ENCODE measurements at regions of chr2 and their contacts with region 1.

Region 1: GRCh38 chr2:64434039-64434657 is 19.8 kb upstream of the LGALSL start:
- DNase-seq: no peak
- H3K4me3 ChIP-seq: no peak overlapping the region
- H3K27ac ChIP-seq: no peak overlapping the region
- H3K4me1 ChIP-seq: no peaks in the 10 kb centered on the region
- H3K27me3 ChIP-seq: no peaks in the 10 kb centered on the region
- CTCF ChIP-seq: no peak
- EP300 ChIP-seq: no peak
- POLR2A ChIP-seq: no peak

Region 2: GRCh38 chr2:64410671-64411070 is 23.5 kb before region 1 on chr2:
- in situ Hi-C with region 1: no loop called
- intact Hi-C with region 1: loop called (anchors 1 kb)
- DNase-seq: no peak
- H3K4me3 ChIP-seq: no peak overlapping the region
- H3K27ac ChIP-seq: no peak overlapping the region
- H3K4me1 ChIP-seq: peaks cover 5 to 22% (median 16%) of the 10 kb centered on the region in 4 donors
- H3K27me3 ChIP-seq: no peaks in the 10 kb centered on the region
- CTCF ChIP-seq: no peak
- EP300 ChIP-seq: no peak
- POLR2A ChIP-seq: no peak

Region 3: DNA sequence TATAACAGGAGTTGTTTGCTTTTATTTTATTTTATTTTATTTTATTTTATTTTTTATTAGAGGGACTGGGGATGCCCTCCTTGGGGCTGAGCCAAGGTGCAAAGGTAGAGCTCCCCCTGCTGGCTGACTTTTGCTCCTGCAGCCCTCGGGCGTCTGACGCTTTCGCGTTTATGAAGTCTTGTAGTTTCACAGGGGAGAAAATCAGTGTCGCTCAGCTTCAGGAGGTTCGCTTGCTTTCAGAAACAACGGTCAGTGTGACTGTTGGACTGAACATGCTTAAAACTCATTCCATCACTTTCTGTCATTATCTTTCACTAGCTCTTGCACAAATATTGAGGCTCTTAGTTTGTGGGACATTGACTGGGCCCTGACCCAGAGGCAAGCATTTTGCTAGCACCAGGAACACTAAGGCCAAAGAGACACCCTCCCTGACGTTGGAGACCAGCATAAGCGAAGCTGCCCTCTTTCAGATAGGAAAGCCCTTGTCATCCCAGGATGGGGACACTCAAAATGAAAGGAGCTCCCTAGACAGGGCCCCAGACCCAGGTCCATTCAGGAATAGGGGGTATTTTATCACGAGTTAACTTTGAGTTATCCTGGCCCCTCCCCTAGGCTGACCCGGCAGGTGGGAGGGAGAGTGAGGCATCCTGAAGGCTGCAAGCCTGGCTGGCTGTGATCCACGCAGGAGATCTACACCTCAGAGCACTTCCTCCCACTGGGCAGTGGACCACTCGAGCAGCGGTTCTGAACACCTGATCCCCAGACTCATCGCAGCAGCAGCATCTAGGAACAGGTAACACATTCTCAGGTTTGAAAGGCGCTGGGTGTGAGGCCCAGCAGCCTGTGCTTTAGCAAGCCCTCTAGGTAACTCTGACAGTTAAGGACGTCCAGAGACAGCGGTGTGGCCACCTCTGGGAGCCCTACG is 54.2 kb after region 1 on chr2:
- in situ Hi-C with region 1: no loop called
- intact Hi-C with region 1: no loop called
- DNase-seq: peak; percentile 78
- H3K4me3 ChIP-seq: no peak overlapping the region
- H3K27ac ChIP-seq: no peak overlapping the region
- H3K4me1 ChIP-seq: peaks cover 0 to 14% (median 5%) of the 10 kb centered on the region in 4 donors
- H3K27me3 ChIP-seq: no peaks in the 10 kb centered on the region
- CTCF ChIP-seq: peak; percentile 96 to 99 (median 98)
- EP300 ChIP-seq: no peak
- POLR2A ChIP-seq: no peak

Region 4: GRCh38 chr2:64516628-64517510 is 82.7 kb after region 1 on chr2:
- in situ Hi-C with region 1: no loop called
- intact Hi-C with region 1: no loop called
- DNase-seq: no peak
- H3K4me3 ChIP-seq: no peak overlapping the region
- H3K27ac ChIP-seq: no peak overlapping the region
- H3K4me1 ChIP-seq: no peaks in the 10 kb centered on the region
- H3K27me3 ChIP-seq: no peaks in the 10 kb centered on the region
- CTCF ChIP-seq: no peak
- EP300 ChIP-seq: no peak
- POLR2A ChIP-seq: no peak

Region 5: GRCh38 chr2:65420712-65421431 is 986.7 kb after region 1 on chr2:
- in situ Hi-C with region 1: no loop called
- intact Hi-C with region 1: no loop called
- DNase-seq: peak; percentile 31
- H3K4me3 ChIP-seq: no peak overlapping the region
- H3K27ac ChIP-seq: peak overlapping the region in 3 of 4 donors; percentile 12 to 42 (median 20)
- H3K4me1 ChIP-seq: peaks cover 3 to 26% (median 24%) of the 10 kb centered on the region in 4 donors
- H3K27me3 ChIP-seq: no peaks in the 10 kb centered on the region
- CTCF ChIP-seq: no peak
- EP300 ChIP-seq: no peak
- POLR2A ChIP-seq: no peak